Activated naive CD8-positive, alpha-beta T cell treated with anti-CD3 and anti-CD28 coated beads, Interleukin-2, amount 10 ng/mL, durations not matched to agents 7 days and 5 days (primary cell): ENCODE measurements at regions of chr5 and their contacts with region 1.

Region 1: GRCh38 chr5:134125039-134126015 is 10.8 kb downstream of the TCF7 start:
- DNase-seq: peak; percentile 43
- ATAC-seq: no peak
- H3K4me3 Mint-ChIP-seq: peak overlapping the region; percentile 46
- H3K27ac Mint-ChIP-seq: peak overlapping the region; percentile 74
- H3K4me1 Mint-ChIP-seq: peaks cover 84% of the 10 kb centered on the region
- H3K27me3 Mint-ChIP-seq: no peaks in the 10 kb centered on the region

Region 2: DNA sequence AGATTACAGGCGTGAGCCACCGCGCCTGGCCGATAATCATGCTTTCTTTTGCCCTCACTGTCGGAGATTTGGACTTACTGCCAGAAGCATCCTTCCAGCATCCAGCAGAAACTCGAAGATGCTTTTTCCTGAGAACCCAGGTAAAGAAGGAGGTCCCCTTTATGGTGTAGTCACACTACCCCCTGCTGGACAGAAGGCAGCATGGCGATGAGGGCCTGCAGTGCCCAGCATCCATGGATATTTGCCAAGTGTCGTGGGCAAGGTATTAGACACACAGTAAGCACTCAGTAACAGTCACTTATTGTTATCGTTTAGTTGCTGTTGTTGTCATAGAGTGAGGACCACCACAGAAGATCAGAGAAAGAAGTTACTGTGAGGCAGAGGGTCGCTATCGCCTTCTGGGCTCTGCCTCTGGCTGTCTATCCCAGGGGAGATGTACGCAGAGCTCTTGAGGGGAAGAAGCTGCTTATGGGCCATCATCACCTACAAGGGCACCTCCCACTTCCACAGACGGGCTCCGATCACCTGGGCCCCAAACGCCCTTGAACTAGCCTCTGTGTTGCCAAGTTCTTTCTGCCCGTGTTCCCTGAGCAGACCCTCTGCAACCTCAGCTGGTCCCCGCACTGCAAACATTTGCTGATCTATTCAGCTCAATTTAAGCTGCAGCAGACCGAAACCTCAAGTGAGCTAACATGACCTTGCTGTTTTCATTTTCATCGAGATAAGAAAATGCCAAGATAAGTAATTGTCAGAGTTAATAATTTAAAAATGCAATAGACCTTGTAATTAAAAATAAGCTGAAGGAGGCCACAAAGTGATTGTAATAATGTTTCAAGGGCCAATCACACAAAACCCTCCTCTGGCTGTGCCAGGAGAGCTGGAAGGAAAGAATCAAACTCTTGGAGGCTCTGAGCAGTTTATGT is 180.8 kb before region 1 on chr5:
- POLR2A ChIA-PET with region 1: no interaction called
- DNase-seq: no peak
- ATAC-seq: no peak
- H3K4me3 Mint-ChIP-seq: no peak overlapping the region
- H3K27ac Mint-ChIP-seq: no peak overlapping the region
- H3K4me1 Mint-ChIP-seq: peaks cover 3% of the 10 kb centered on the region
- H3K27me3 Mint-ChIP-seq: no peaks in the 10 kb centered on the region

Region 3: DNA sequence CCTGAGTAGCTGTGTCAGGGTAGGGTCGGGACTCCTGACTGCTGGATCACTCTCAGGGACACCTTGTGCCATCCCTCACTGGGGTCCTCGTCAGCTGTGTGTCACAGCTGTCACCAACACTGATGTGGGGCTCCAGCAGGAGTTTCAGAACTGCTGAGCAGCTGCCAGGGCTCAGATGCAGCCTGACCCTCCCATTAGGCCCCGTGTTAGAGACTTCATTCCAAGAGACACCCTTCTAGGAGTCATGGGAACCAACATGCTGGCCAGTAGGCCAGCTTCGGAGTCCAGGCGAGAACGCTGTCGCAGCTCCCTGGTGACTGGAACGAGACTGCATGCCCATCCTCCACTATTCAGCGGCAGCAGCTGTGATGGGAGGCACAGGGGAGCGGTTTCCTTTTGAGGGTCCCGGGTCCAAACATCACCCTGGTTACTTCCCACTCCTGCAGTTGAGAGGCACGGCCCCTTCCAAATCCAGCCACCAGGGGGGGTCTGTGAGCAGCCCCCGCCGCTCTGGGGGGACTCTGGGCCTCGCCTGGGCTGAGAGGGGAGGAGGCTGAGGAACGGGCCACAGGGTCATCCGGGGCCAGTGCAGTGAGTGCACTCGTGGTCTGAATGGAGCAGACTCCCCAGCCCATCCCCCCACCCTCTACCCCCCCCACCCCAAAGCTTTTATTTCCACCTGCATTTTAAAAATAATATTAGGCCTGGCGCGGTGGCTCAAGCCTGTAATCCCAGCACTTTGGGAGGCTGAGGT is 23.5 kb before region 1 on chr5:
- POLR2A ChIA-PET with region 1: interaction called, 25 read pairs
- DNase-seq: peak; percentile 88
- ATAC-seq: peak; percentile 43
- H3K4me3 Mint-ChIP-seq: no peak overlapping the region
- H3K27ac Mint-ChIP-seq: no peak overlapping the region
- H3K4me1 Mint-ChIP-seq: peaks cover 67% of the 10 kb centered on the region
- H3K27me3 Mint-ChIP-seq: no peaks in the 10 kb centered on the region